ENCODE measurements at regions of chr10 and their contacts with region 1.

Region 1: DNA sequence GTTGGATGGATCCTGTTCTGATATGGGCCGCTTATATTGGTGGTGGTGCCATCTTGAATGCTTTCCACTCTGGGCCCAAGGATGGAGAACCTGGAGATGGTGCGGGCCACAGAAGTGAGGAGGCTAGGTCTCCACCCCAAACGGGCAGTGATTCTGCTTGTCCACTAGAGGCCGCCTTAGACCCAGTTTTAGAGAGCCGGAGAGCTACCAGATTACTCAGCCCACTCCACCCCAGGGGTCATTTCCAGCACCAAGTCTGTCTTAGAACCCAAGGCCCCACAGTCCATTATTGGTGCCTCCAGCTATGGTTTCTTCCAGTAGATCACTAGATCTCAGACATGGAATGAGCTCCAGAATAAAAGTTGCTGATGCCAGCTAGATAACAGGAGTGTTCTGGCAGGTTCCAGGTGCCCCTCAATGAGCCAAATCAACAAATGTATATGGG is 11.8 kb upstream of the CAMK2G start:
- DNase-seq: peak; percentile 88
- H3K4me3 Mint-ChIP-seq: no peak overlapping the region
- H3K27ac Mint-ChIP-seq: peak overlapping the region; percentile 95
- H3K4me1 Mint-ChIP-seq: peaks cover 40% of the 10 kb centered on the region
- H3K27me3 Mint-ChIP-seq: no peaks in the 10 kb centered on the region
- CTCF ChIP-seq: peak; percentile 86

Region 2: GRCh38 chr10:73908853-73909538 is 22.9 kb after region 1 on chr10:
- CTCF ChIA-PET with region 1: interaction called, 51 read pairs
- intact Hi-C with region 1: loop called (anchors 1 kb)
- DNase-seq: peak; percentile 82
- H3K4me3 Mint-ChIP-seq: peak overlapping the region; percentile 100
- H3K27ac Mint-ChIP-seq: peak overlapping the region; percentile 84
- H3K4me1 Mint-ChIP-seq: peaks cover 78% of the 10 kb centered on the region
- H3K27me3 Mint-ChIP-seq: no peaks in the 10 kb centered on the region
- CTCF ChIP-seq: no peak

Region 3: GRCh38 chr10:73940634-73941221 is 54.6 kb after region 1 on chr10:
- CTCF ChIA-PET with region 1: interaction called, 98 read pairs
- intact Hi-C with region 1: loop called (anchors 1 kb)
- DNase-seq: peak; percentile 96
- H3K4me3 Mint-ChIP-seq: peak overlapping the region; percentile 62
- H3K27ac Mint-ChIP-seq: peak overlapping the region; percentile 82
- H3K4me1 Mint-ChIP-seq: peaks cover 39% of the 10 kb centered on the region
- H3K27me3 Mint-ChIP-seq: no peaks in the 10 kb centered on the region
- CTCF ChIP-seq: peak; percentile 97

Region 4: GRCh38 chr10:73997787-73998622 is 111.9 kb after region 1 on chr10 and contains the start of gene VCL:
- CTCF ChIA-PET with region 1: interaction called, 13 read pairs
- intact Hi-C with region 1: loop called (anchors 2 kb)
- DNase-seq: peak; percentile 100
- H3K4me3 Mint-ChIP-seq: peak within 1 kb of the TSS; percentile 97
- H3K27ac Mint-ChIP-seq: peak within 1 kb of the TSS; percentile 98
- H3K4me1 Mint-ChIP-seq: peaks cover 49% of the 10 kb centered on the region
- H3K27me3 Mint-ChIP-seq: no peaks in the 10 kb centered on the region
- CTCF ChIP-seq: no peak
- total RNA-seq, gene VCL: 234 and 237 TPM in 2 replicates

Region 5: DNA sequence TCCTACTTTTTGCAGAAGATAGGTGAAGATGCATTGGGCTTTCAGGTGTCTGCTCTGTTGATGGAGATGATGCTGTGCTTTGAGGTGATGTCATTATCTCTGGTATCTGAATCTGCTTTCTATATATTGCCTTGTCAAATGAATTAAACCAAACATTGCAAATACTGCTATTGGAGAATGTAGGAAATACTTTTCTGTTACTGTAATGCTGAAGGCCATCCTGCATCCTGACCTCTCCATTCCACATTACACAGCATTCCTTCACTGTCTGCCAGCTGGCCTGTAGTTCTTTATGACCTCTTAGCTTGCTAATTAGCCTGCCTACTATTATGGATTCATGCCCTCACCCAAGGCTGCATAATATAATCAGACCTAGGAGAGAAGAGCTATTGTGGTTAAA is 185.1 kb after region 1 on chr10:
- CTCF ChIA-PET with region 1: interaction called, 10 read pairs
- intact Hi-C with region 1: no loop called
- DNase-seq: no peak
- H3K4me3 Mint-ChIP-seq: no peak overlapping the region
- H3K27ac Mint-ChIP-seq: peak overlapping the region; percentile 86
- H3K4me1 Mint-ChIP-seq: peaks cover 85% of the 10 kb centered on the region
- H3K27me3 Mint-ChIP-seq: no peaks in the 10 kb centered on the region
- CTCF ChIP-seq: no peak

Region 6: DNA sequence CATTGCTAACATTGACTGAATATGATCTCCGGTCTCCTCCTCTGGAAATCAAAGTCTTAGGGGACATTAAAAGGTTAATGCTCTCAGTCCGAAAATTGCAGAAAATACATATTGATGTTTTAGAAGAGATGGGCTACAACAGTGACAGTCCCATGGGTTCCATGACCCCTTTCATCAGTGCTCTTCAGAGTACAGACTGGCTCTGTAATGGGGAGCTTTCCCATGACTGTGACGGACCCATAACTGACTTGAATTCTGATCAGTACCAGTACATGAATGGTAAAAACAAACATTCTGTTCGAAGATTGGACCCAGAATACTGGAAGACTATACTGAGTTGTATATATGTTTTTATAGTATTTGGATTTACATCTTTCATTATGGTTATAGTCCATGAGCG is 1264.5 kb after region 1 on chr10:
- CTCF ChIA-PET with region 1: no interaction called
- intact Hi-C with region 1: no loop called
- DNase-seq: no peak
- H3K4me3 Mint-ChIP-seq: no peak overlapping the region
- H3K27ac Mint-ChIP-seq: no peak overlapping the region
- H3K4me1 Mint-ChIP-seq: no peaks in the 10 kb centered on the region
- H3K27me3 Mint-ChIP-seq: no peaks in the 10 kb centered on the region
- CTCF ChIP-seq: no peak